ENCODE measurements at regions of chr17 and their contacts with region 1.

Region 1: GRCh38 chr17:50087246-50087911 is 7.8 kb upstream of the PDK2 start:
- DNase-seq: peak in 3 of 4 donors; percentile 65 to 77 (median 69)
- ATAC-seq: peak; percentile 84
- H3K4me3 ChIP-seq: no peak overlapping the region
- H3K27ac ChIP-seq: no peak overlapping the region
- H3K4me1 ChIP-seq: no peaks in the 10 kb centered on the region
- H3K27me3 ChIP-seq: no peaks in the 10 kb centered on the region
- CTCF ChIP-seq: peak; percentile 97 to 98

Region 2: GRCh38 chr17:50001140-50001714 is 86.2 kb before region 1 on chr17:
- intact Hi-C with region 1: no loop called
- DNase-seq: no peak
- ATAC-seq: no peak
- H3K4me3 ChIP-seq: no peak overlapping the region
- H3K27ac ChIP-seq: no peak overlapping the region
- H3K4me1 ChIP-seq: peaks cover 0 to 17% of the 10 kb centered on the region in 2 donors
- H3K27me3 ChIP-seq: peaks cover 24 to 81% of the 10 kb centered on the region in 2 donors
- CTCF ChIP-seq: no peak

Region 3: GRCh38 chr17:50026901-50027630 is 60.3 kb before region 1 on chr17:
- intact Hi-C with region 1: loop called in 1 of 2 experiments (anchors 2 kb)
- DNase-seq: peak; percentile 70 to 93 (median 82)
- ATAC-seq: peak; percentile 93
- H3K4me3 ChIP-seq: peak overlapping the region; percentile 16 to 24
- H3K27ac ChIP-seq: peak overlapping the region; percentile 44 to 61
- H3K4me1 ChIP-seq: peaks cover 14 to 21% of the 10 kb centered on the region in 2 donors
- H3K27me3 ChIP-seq: peaks cover 0 to 17% of the 10 kb centered on the region in 2 donors
- CTCF ChIP-seq: peak; percentile 96 to 99

Region 4: GRCh38 chr17:50139950-50140871 is 52.8 kb after region 1 on chr17:
- intact Hi-C with region 1: no loop called
- DNase-seq: peak in 3 of 4 donors; percentile 76 to 96 (median 82)
- ATAC-seq: peak; percentile 92
- H3K4me3 ChIP-seq: peak overlapping the region in 1 of 2 donors; percentile 4
- H3K27ac ChIP-seq: peak overlapping the region; percentile 19 to 50
- H3K4me1 ChIP-seq: peaks cover 14 to 63% of the 10 kb centered on the region in 2 donors
- H3K27me3 ChIP-seq: no peaks in the 10 kb centered on the region
- CTCF ChIP-seq: peak; percentile 97 to 98

Region 5: GRCh38 chr17:50200457-50201275 is 113.3 kb after region 1 on chr17:
- intact Hi-C with region 1: no loop called
- DNase-seq: peak; percentile 87 to 95 (median 94)
- ATAC-seq: peak; percentile 78
- H3K4me3 ChIP-seq: peak overlapping the region; percentile 43 to 49
- H3K27ac ChIP-seq: peak overlapping the region; percentile 65 to 88
- H3K4me1 ChIP-seq: peaks cover 0 to 29% of the 10 kb centered on the region in 2 donors
- H3K27me3 ChIP-seq: peaks cover 7 to 58% of the 10 kb centered on the region in 2 donors
- CTCF ChIP-seq: peak; percentile 99 to 100

Measured in left lung (tissue), 14 donors.